ENCODE measurements at regions of chr2 and their contacts with region 1.

Region 1: DNA sequence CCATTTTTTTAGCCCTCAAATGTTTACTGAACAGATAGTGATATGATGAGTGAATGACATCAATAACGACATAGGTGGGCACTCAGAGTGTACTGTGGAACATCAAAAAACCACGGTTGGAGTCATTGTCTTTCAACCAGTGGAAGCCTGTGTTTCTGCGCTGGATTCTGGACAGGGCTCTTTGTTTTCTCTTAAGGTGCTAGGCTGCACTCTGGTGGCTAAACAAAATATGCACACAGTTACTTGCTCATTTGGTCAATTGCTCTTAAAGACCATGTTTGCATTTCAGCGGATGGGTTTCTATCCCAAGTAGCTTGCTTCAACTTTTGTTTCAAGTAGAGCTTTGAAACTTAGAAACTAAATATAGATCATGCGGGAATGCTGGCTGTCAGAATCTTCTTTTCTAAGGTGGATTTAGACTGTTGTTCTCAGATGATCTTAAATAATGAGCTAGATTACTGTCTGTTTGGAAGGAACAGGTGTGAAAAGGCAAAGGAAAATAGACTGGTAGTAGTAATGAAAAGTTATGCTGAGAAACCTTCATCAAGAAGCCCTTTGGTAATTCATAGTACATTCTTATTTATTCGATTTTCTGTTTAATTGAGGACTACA is 48.5 kb upstream of the LYPD6B start:
- DNase-seq: peak; percentile 75 to 83
- H3K4me3 ChIP-seq: no peak overlapping the region
- H3K4me1 ChIP-seq: peaks cover 6% of the 10 kb centered on the region; the same call in 1 of the 2 replicates
- H3K27me3 ChIP-seq: no peaks in the 10 kb centered on the region

Region 2: DNA sequence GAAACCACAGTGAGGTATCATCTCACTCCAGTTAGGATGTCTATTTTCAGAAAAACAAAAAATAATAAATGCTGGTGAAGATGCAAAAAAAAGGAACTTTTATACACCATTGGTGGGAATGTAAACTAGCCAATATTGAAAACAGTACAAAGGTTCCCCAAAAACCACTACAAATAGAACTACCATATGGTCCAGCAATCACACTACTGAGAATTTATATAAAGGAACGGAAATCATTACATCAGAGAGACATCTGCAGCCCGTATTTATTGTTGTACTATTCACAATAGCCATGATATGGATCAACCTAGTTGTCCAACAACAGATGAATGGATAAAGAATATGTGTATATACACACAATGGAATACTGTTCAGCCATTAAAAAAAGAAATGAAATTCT is 1021.4 kb before region 1 on chr2:
- in situ Hi-C with region 1: loop called (anchors 25 kb)
- DNase-seq: no peak
- H3K4me3 ChIP-seq: no peak overlapping the region
- H3K4me1 ChIP-seq: peaks cover under 1% of the 10 kb centered on the region; the same call in 1 of the 2 replicates
- H3K27me3 ChIP-seq: no peaks in the 10 kb centered on the region

Region 3: DNA sequence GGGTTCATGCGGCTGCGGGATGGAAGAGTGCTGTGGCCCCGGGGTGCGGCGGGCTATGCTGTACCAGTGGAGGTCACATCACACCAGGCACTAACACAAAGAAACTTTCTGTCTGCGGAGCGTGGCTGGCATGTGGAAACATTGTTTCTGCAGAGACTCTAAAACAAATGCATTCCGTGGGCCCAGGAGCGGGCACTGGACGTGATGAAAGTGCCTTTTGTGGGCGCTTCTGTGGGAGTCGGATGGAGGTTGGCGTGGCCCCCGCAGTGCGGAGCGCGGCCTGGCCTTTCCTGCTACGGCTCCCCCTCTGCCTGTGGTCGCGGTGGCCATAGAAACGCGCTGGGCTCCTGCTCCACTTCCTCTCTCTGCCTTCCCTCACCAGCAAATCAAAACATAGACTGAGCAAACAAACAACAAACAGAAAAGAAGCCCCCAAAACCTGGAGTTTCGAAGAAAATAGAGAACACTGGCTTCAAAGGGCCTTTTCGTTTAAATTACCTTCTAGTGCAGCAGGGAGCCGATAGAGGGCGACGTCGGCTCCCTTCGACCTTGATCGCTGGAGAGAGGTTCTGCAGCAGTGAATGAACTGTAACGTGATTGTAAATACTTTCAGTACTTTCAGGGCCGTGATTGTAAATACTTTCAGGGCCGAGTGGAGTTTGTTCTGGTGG is 63.6 kb before region 1 on chr2:
- in situ Hi-C with region 1: loop called (anchors 10 kb)
- DNase-seq: peak; percentile 70
- H3K4me3 ChIP-seq: no peak overlapping the region
- H3K4me1 ChIP-seq: peaks cover 20% of the 10 kb centered on the region
- H3K27me3 ChIP-seq: no peaks in the 10 kb centered on the region

Region 4: DNA sequence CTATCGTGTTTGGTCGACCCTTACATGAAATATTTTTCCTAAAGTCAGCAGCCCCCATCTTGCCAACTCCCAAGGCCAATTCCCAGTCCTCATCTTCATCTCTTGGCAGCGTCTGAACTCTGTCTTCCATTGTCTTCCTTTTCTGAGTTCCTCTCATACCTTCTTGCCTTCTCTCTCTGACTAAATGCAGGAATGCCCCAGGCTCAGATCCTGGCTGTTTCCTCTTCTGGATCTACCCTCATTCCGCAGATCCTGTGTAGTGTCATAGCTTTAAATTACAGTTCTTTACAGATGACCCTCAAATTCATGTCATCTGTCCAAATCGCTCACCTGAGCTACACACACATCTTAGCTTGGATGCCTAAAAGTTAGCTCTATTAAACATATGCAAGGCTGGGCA is 502.9 kb after region 1 on chr2:
- in situ Hi-C with region 1: no loop called
- DNase-seq: no peak
- H3K4me3 ChIP-seq: no peak overlapping the region
- H3K4me1 ChIP-seq: no peaks in the 10 kb centered on the region
- H3K27me3 ChIP-seq: no peaks in the 10 kb centered on the region

Measured in HAP-1 (cell line).